CD4-positive, alpha-beta T cell (primary cell): ENCODE measurements at regions of chr17 and their contacts with region 1.

Region 1: GRCh38 chr17:13031718-13032350 is 14.0 kb upstream of the ELAC2 start:
- DNase-seq: peak; percentile 15 to 77 (median 32)
- ATAC-seq: peak; percentile 76
- H3K4me3 ChIP-seq: no peak overlapping the region
- H3K4me3 Mint-ChIP-seq: no peak overlapping the region
- H3K27ac ChIP-seq: no peak overlapping the region
- H3K27ac Mint-ChIP-seq: peak overlapping the region; percentile 19
- H3K4me1 ChIP-seq: peaks cover 13% of the 10 kb centered on the region
- H3K4me1 Mint-ChIP-seq: peaks cover 13% of the 10 kb centered on the region
- H3K27me3 ChIP-seq: no peaks in the 10 kb centered on the region
- H3K27me3 Mint-ChIP-seq: peaks cover 6% of the 10 kb centered on the region
- CTCF ChIP-seq: peak; percentile 81

Region 2: GRCh38 chr17:13017659-13018459 is 14.0 kb before region 1 on chr17 and contains the start of gene ELAC2:
- CTCF ChIA-PET with region 1: interaction called, 26 read pairs
- POLR2A ChIA-PET with region 1: interaction called, 31 read pairs
- intact Hi-C with region 1: no loop called
- DNase-seq: peak; percentile 90 to 98 (median 92)
- ATAC-seq: peak; percentile 99
- H3K4me3 ChIP-seq: peak within 1 kb of the TSS; percentile 84
- H3K4me3 Mint-ChIP-seq: peak within 1 kb of the TSS; percentile 100
- H3K27ac ChIP-seq: peak within 1 kb of the TSS; percentile 61 to 76
- H3K27ac Mint-ChIP-seq: peak within 1 kb of the TSS; percentile 93
- H3K4me1 ChIP-seq: peaks cover 26% of the 10 kb centered on the region
- H3K4me1 Mint-ChIP-seq: peaks cover 44% of the 10 kb centered on the region
- H3K27me3 ChIP-seq: no peaks in the 10 kb centered on the region
- H3K27me3 Mint-ChIP-seq: no peaks in the 10 kb centered on the region
- CTCF ChIP-seq: peak; percentile 17
- total RNA-seq, gene ELAC2: 51.6 to 53.3 TPM

Region 3: GRCh38 chr17:14926526-14927122 is 1894.8 kb after region 1 on chr17:
- CTCF ChIA-PET with region 1: interaction called, 3 read pairs
- POLR2A ChIA-PET with region 1: interaction called, 3 read pairs
- intact Hi-C with region 1: loop called (anchors 1 to 5 kb)
- DNase-seq: peak in 13 of 14 experiments; percentile 20 to 82 (median 42)
- ATAC-seq: no peak
- H3K4me3 ChIP-seq: no peak overlapping the region
- H3K4me3 Mint-ChIP-seq: no peak overlapping the region
- H3K27ac ChIP-seq: no peak overlapping the region
- H3K27ac Mint-ChIP-seq: no peak overlapping the region
- H3K4me1 ChIP-seq: no peaks in the 10 kb centered on the region
- H3K4me1 Mint-ChIP-seq: no peaks in the 10 kb centered on the region
- H3K27me3 ChIP-seq: peaks cover 5 to 10% of the 10 kb centered on the region in 2 experiments
- H3K27me3 Mint-ChIP-seq: peaks cover 22% of the 10 kb centered on the region
- CTCF ChIP-seq: peak; percentile 85